ENCODE measurements at regions of chr2 and their contacts with region 1.

Region 1: DNA sequence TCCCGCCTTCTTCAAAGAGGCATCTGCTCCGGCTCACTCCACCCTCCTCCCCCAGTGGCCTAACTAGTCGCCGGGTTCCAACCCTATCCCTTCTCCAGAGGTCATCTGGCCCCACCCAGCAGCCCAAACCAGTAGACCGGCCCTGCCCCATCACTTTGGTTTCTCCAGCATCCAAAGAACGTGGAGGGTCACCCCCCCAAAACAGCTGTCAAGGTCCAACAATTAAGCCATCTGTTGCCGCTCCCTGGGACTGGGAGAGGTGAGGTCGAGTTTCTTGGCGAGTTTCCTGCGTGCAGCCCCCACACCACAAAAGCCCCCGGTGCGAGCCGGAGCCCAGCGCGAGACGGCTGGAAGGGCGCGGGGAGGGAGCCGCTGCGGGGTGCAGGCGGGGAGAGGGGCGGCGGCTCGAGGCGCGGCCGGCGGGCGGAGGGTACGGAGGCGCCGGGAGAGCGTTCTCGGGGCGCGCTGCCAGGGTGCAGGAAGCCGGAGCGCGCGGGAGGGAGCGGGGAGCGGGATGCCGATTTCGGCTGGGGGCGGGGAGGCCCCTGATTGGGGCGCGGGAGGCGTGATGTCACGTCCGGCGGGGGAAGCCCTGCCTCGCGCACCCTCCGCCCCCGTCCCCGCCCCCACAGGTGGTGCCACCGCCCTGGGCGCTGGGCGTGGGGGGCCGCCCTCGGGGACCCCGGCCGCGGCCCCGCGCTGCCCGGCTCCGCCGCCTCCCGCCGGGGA is 571 bp upstream of the GPC1 start:
- DNase-seq: peak; percentile 57

Region 2: GRCh38 chr2:240232961-240233893 is 201.7 kb before region 1 on chr2:
- in situ Hi-C with region 1: loop called (anchors 25 kb)
- DNase-seq: peak; percentile 85

Region 3: GRCh38 chr2:240759454-240759853 is 324.6 kb after region 1 on chr2:
- in situ Hi-C with region 1: no loop called
- DNase-seq: no peak